Activated naive CD4-positive, alpha-beta T cell treated with anti-CD3 and anti-CD28 coated beads for 36 hours (primary cell): ENCODE measurements at regions of chr5 and their contacts with region 1.

Region 1: DNA sequence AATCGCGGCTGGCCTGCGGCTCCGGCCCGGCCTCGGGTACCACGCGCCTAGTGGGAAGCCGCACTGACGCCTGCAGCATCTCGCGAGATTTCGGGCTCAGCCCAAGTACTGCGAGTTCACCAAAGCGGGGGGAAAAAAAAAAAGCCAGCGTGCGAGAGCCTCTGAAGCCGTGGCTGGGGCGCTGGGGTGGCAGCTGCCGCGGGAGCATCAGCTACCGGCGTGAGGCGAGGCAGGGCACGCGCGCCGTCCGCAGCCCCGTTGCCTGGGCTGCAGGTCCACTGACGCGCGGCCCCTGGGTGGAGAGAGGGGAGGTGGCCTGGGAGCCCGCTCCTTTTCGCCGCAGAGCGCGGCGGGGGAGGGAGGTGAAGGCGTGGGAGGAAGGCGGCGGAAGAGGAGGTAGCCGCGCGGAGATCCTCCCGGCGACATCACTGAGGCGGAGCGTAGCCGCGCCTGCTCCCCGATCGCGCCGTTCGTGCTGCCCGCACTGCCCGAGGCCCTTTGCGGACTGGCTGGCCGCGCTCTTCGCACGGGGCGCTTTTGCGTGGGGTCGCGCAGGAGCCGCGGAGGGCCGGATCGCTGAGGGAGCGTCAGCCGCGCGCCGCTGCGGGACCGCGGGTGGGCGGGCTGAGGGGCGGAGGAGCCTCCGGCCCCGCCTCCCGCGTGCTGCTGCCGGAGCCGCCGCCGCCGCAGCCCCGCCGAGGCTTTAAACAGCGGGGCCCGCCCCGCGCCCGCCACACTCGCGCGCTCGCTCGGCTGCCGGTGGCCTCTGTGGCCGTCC is at the start of gene SLC12A2:
- DNase-seq: peak; percentile 90
- H3K4me3 Mint-ChIP-seq: peak within 1 kb of the TSS; percentile 93
- H3K27ac Mint-ChIP-seq: peak within 1 kb of the TSS; percentile 96
- H3K4me1 Mint-ChIP-seq: peaks cover 47% of the 10 kb centered on the region
- H3K27me3 Mint-ChIP-seq: no peaks in the 10 kb centered on the region
- total RNA-seq, gene SLC12A2: 5.3 to 6.8 TPM

Region 2: GRCh38 chr5:126600631-126601511 is 1482.4 kb before region 1 on chr5 and contains the start of gene PHAX:
- CTCF ChIA-PET with region 1: no interaction called
- intact Hi-C with region 1: loop called (anchors 10 kb)
- DNase-seq: peak; percentile 78
- H3K4me3 Mint-ChIP-seq: peak within 1 kb of the TSS; percentile 90
- H3K27ac Mint-ChIP-seq: peak within 1 kb of the TSS; percentile 93
- H3K4me1 Mint-ChIP-seq: peaks cover 34% of the 10 kb centered on the region
- H3K27me3 Mint-ChIP-seq: no peaks in the 10 kb centered on the region
- total RNA-seq, gene PHAX: 34.9 to 37.2 TPM

Region 3: DNA sequence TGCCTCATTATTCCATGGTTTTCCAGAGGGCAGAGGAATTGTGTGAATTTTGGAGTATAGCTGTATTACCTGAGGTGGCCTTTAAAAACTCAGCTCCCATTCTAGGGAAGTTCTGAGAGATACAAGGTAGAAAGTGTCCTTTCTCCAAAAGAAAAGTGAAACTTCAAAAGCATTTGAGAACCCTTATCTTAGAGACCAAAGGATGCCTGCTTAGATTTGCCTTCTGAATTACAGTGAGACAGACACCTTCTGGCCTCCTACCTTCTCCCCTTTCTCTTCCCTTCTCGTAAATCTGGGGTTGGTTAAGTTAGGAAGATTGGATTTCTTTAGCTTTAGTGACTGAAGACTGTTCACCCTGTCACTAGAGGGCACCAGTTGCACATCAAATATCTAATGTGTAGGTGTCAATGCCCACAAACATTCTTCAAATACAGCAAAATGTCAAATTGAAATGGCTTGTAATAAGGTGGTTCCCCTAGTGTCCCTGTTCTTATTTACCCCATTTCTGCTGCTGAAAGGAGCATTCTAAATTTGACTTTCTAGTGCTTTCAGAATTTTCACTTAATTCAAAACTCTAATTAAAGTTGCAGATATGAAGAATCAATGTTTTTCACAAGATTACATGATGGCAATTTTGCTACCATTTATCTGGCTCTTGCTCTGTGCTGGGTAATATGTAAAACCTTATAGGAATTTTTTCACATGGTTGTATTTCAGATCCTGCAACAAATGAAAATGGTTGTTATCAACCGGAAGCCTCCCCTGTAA is 519.0 kb before region 1 on chr5:
- CTCF ChIA-PET with region 1: no interaction called
- intact Hi-C with region 1: loop called (anchors 5 kb)
- DNase-seq: peak; percentile 69
- H3K4me3 Mint-ChIP-seq: no peak overlapping the region
- H3K27ac Mint-ChIP-seq: no peak overlapping the region
- H3K4me1 Mint-ChIP-seq: peaks cover 7% of the 10 kb centered on the region
- H3K27me3 Mint-ChIP-seq: peaks cover 12% of the 10 kb centered on the region

Region 4: DNA sequence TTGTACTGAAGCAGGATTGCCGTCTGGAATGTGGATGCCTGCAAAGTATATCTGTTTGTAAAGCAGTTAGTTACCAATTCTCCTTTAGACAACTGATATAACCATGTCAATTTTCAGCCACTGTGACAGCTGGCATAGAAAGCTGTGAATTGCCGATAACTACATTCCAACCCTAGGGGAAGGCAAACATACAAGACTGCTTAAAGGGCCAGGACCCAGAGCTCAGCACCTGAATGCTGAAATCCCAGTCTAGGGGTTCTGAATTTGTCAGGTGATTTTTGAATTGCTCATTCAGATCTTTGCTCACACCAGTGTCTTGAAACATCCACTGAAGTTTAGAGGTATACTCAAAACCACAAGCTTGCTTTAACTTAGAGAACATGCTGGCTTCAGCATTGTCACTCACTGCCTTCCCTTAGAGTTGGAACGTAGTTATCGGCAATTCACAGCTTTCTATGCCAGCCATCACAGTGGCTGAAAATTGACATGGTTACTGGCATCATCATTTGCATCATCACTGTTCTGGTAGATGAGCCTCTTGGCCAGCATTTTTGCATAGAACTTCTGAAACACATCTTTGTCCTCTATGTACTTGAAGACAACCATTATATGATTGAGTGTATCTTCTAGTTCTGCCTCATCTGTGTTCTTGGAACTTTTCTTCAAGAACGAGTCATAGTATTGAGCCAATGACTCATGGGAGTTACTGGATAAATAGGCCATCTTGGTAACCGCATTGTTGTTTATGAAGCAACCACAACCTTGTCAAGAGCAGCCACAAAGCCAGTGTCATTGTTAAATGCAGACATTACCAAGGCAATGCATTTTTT is 297.9 kb before region 1 on chr5:
- CTCF ChIA-PET with region 1: no interaction called
- intact Hi-C with region 1: loop called (anchors 1 kb)
- DNase-seq: peak; percentile 36
- H3K4me3 Mint-ChIP-seq: no peak overlapping the region
- H3K27ac Mint-ChIP-seq: peak overlapping the region; percentile 62
- H3K4me1 Mint-ChIP-seq: no peaks in the 10 kb centered on the region
- H3K27me3 Mint-ChIP-seq: peaks cover 23% of the 10 kb centered on the region

Region 5: DNA sequence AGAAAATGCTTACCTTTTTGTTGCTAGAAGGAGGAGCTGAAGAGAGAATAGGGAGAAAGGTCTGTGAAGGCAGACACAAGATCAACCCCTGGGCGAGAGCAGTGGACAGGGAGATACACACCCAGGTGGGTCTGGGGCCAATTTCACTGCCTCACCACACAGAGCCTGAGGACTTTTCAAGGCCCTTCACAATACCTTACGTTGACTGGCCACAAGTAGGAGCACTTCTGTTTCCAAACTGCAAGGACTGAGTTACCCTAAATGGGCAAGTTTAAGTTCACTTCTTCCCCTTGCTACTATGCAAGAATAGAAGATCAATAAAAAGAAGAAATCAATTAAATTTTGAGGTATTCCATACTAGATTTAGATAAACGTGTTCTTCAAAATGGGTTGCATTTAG is 174.1 kb before region 1 on chr5:
- CTCF ChIA-PET with region 1: no interaction called
- intact Hi-C with region 1: loop called (anchors 2 kb)
- DNase-seq: peak; percentile 23
- H3K4me3 Mint-ChIP-seq: no peak overlapping the region
- H3K27ac Mint-ChIP-seq: no peak overlapping the region
- H3K4me1 Mint-ChIP-seq: no peaks in the 10 kb centered on the region
- H3K27me3 Mint-ChIP-seq: no peaks in the 10 kb centered on the region

Region 6: GRCh38 chr5:128201065-128201926 is 118.1 kb after region 1 on chr5:
- CTCF ChIA-PET with region 1: interaction called, 5 read pairs
- intact Hi-C with region 1: loop called (anchors 1 kb)
- DNase-seq: peak; percentile 90
- H3K4me3 Mint-ChIP-seq: no peak overlapping the region
- H3K27ac Mint-ChIP-seq: no peak overlapping the region
- H3K4me1 Mint-ChIP-seq: peaks cover 32% of the 10 kb centered on the region
- H3K27me3 Mint-ChIP-seq: no peaks in the 10 kb centered on the region